WTC11 (cell line): ENCODE measurements at regions of chr1 and their contacts with region 1.

Region 1: DNA sequence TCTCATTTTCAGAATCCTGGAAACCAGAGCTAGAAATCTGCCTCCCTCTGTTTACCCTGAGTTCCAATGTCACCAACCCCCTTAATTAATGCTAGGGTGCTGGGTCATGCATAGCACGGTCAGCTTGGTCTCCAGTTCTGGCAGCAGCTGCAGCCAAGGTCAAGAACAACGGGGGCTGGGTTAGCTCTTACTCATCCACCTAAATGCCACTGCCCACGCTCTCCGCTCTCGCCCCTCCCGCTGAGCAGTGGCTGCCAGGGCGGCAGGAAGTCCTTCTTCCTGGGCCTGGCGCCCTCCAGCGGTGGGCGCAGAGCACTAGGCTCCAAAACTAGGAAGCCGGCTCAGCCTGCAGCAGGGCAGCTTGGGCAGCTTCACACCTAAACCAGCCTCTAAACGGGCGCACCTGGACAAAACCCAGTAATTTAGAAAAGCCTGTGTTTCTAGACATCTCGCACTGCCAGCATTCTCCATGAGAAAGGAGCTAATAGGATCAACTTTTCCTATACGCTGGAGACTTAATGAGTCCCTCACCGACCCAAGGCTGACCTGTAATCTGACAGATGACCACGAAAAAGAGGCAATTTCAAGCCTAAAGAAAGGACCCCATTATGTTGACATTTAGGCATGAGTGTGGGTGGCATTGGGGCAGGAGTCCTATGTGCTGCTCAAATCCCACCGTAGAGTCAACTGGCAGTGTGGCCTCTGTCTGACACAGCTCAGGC is 78.3 kb upstream of the LRRN2 start:
- DNase-seq: peak; percentile 85
- ATAC-seq: peak; percentile 98
- H3K4me3 Mint-ChIP-seq: peak overlapping the region; percentile 54
- H3K27ac Mint-ChIP-seq: no peak overlapping the region
- H3K4me1 Mint-ChIP-seq: peaks cover 16% of the 10 kb centered on the region
- H3K27me3 Mint-ChIP-seq: peaks cover 47% of the 10 kb centered on the region
- CTCF ChIP-seq: peak; percentile 67

Region 2: GRCh38 chr1:204572931-204573891 is 190.7 kb before region 1 on chr1:
- CTCF ChIA-PET with region 1: interaction called, 22 read pairs
- POLR2A ChIA-PET with region 1: no interaction called
- DNase-seq: no peak
- ATAC-seq: no peak
- H3K4me3 Mint-ChIP-seq: no peak overlapping the region
- H3K27ac Mint-ChIP-seq: no peak overlapping the region
- H3K4me1 Mint-ChIP-seq: peaks cover 82% of the 10 kb centered on the region
- H3K27me3 Mint-ChIP-seq: peaks cover 22% of the 10 kb centered on the region
- CTCF ChIP-seq: no peak

Region 3: GRCh38 chr1:204623894-204624361 is 139.9 kb before region 1 on chr1:
- CTCF ChIA-PET with region 1: interaction called, 18 read pairs
- POLR2A ChIA-PET with region 1: no interaction called
- DNase-seq: peak; percentile 63
- ATAC-seq: peak; percentile 65
- H3K4me3 Mint-ChIP-seq: no peak overlapping the region
- H3K27ac Mint-ChIP-seq: no peak overlapping the region
- H3K4me1 Mint-ChIP-seq: peaks cover 29% of the 10 kb centered on the region
- H3K27me3 Mint-ChIP-seq: no peaks in the 10 kb centered on the region; the same call in 1 of the 2 replicates
- CTCF ChIP-seq: no peak

Region 4: GRCh38 chr1:204685236-204686006 is 78.4 kb before region 1 on chr1 and contains the start of gene LRRN2:
- CTCF ChIA-PET with region 1: interaction called, 13 read pairs
- POLR2A ChIA-PET with region 1: no interaction called
- DNase-seq: peak; percentile 42
- ATAC-seq: peak; percentile 33
- H3K4me3 Mint-ChIP-seq: peak within 1 kb of the TSS; percentile 85
- H3K27ac Mint-ChIP-seq: no peak within 1 kb of the TSS; the same call in 1 of the 2 replicates
- H3K4me1 Mint-ChIP-seq: peaks cover 26% of the 10 kb centered on the region
- H3K27me3 Mint-ChIP-seq: peaks cover 65% of the 10 kb centered on the region
- CTCF ChIP-seq: no peak
- total RNA-seq, gene LRRN2: 3.2 to 5.3 TPM (median 3.4 TPM) in 3 replicates

Region 5: DNA sequence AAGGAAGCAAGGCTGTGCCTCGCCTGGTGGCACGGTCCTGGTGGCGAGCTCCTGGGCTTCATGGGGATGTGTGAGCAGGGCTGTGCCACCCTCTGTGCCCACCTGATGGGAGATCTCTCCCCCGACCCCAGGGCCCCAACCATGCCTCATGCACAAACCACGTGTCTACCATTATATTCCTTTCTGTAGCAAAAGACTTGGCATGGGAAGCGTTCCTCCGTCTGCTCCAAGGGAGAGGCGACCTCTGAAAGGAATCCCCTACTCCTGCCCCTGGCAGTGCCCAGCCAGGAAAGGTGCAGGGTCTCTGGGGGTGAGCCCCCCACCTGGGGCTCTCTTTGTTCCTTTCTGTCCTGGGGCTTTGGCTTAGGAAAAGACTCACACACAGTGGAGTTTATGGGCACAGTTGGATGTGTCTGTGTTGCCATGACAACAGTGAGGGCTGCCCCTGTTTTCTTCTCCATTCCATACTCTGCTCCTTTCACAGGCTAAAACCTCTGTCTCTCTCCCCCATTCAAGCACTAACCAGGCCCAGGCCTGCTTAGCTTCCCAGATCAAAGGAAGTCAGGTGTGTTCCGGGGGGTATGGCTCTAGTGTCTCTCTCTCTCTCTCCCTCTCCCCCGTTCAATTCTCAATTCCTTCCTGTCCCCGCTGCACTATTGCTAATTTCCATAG is 56.9 kb before region 1 on chr1:
- CTCF ChIA-PET with region 1: interaction called, 13 read pairs
- POLR2A ChIA-PET with region 1: no interaction called
- DNase-seq: peak; percentile 52
- ATAC-seq: peak; percentile 20
- H3K4me3 Mint-ChIP-seq: 0 out of 2 replicates have a peak overlapping the region, but pooled peaks have one; percentile 4
- H3K27ac Mint-ChIP-seq: no peak overlapping the region
- H3K4me1 Mint-ChIP-seq: peaks cover 63% of the 10 kb centered on the region
- H3K27me3 Mint-ChIP-seq: peaks cover 93% of the 10 kb centered on the region
- CTCF ChIP-seq: no peak

Region 6: GRCh38 chr1:204751894-204752687 is 11.8 kb before region 1 on chr1:
- CTCF ChIA-PET with region 1: interaction called, 75 read pairs
- POLR2A ChIA-PET with region 1: no interaction called
- DNase-seq: peak; percentile 73
- ATAC-seq: peak; percentile 85
- H3K4me3 Mint-ChIP-seq: 0 out of 2 replicates have a peak overlapping the region, but pooled peaks have one; percentile 25
- H3K27ac Mint-ChIP-seq: no peak overlapping the region
- H3K4me1 Mint-ChIP-seq: peaks cover 24% of the 10 kb centered on the region
- H3K27me3 Mint-ChIP-seq: peaks cover 12% of the 10 kb centered on the region
- CTCF ChIP-seq: no peak